PC-9 (cell line): ENCODE measurements at regions of chr10 and their contacts with region 1.

Region 1: GRCh38 chr10:106175760-106176377 is 988.6 kb downstream of the SORCS1 start:
- DNase-seq: no peak
- H3K4me3 ChIP-seq: no peak overlapping the region
- H3K27ac ChIP-seq: no peak overlapping the region
- H3K4me1 ChIP-seq: no peaks in the 10 kb centered on the region
- H3K27me3 ChIP-seq: no peaks in the 10 kb centered on the region
- CTCF ChIP-seq: peak; percentile 62

Region 2: DNA sequence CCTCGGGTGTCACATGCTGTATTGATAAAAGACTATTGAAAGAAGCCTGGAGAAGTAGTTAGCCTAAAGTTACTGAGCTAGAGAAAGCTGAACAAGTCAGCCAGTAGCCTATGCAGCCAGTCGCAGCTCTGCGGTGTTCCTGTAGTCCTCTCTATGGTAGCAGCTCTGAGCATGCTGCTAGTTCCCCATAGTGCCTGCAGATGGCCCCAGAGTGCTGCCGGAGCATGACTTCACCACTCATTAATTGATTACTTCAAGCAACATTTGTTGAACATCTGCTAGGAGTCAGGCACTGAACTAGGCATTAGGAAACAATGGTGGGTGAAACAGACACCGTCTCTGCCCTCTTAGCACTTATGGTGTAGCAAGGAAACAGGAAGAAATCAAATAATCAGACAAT is 1112.1 kb before region 1 on chr10:
- CTCF ChIA-PET with region 1: no interaction called
- POLR2A ChIA-PET with region 1: no interaction called
- intact Hi-C with region 1: loop called (anchors 10 kb)
- DNase-seq: peak in 1 of 2 experiments; percentile 0
- H3K4me3 ChIP-seq: no peak overlapping the region
- H3K27ac ChIP-seq: no peak overlapping the region
- H3K4me1 ChIP-seq: no peaks in the 10 kb centered on the region
- H3K27me3 ChIP-seq: no peaks in the 10 kb centered on the region
- CTCF ChIP-seq: peak; percentile 53

Region 3: DNA sequence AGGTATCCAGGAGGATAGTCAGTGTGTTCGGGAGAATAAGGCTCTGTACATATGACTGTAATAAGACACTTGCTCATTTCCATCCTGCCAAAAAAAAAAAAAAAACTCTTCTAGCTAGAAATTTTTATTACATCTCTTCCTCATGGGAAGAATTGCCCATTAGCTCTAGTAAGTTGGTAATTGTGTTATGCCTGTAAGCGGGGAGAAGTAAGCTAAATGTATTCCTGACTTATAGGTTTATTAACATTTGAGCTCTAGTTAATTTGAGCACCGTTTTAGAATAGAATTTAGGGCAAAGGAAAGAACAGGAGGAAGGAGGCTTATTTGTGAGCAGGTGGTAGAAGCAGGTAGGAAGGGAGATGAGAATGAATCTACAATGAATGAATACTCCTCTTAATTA is 222.0 kb before region 1 on chr10:
- CTCF ChIA-PET with region 1: no interaction called
- POLR2A ChIA-PET with region 1: no interaction called
- intact Hi-C with region 1: loop called (anchors 2 kb)
- DNase-seq: no peak
- H3K4me3 ChIP-seq: no peak overlapping the region
- H3K27ac ChIP-seq: no peak overlapping the region
- H3K4me1 ChIP-seq: no peaks in the 10 kb centered on the region
- H3K27me3 ChIP-seq: no peaks in the 10 kb centered on the region
- CTCF ChIP-seq: no peak

Region 4: GRCh38 chr10:106147021-106147420 is 28.8 kb before region 1 on chr10:
- CTCF ChIA-PET with region 1: no interaction called
- POLR2A ChIA-PET with region 1: no interaction called
- intact Hi-C with region 1: no loop called
- DNase-seq: no peak
- H3K4me3 ChIP-seq: no peak overlapping the region
- H3K27ac ChIP-seq: no peak overlapping the region
- H3K4me1 ChIP-seq: no peaks in the 10 kb centered on the region
- H3K27me3 ChIP-seq: no peaks in the 10 kb centered on the region
- CTCF ChIP-seq: no peak

Region 5: GRCh38 chr10:106252541-106252940 is 76.7 kb after region 1 on chr10:
- CTCF ChIA-PET with region 1: no interaction called
- POLR2A ChIA-PET with region 1: no interaction called
- intact Hi-C with region 1: no loop called
- DNase-seq: no peak
- H3K4me3 ChIP-seq: no peak overlapping the region
- H3K27ac ChIP-seq: no peak overlapping the region
- H3K4me1 ChIP-seq: no peaks in the 10 kb centered on the region
- H3K27me3 ChIP-seq: no peaks in the 10 kb centered on the region
- CTCF ChIP-seq: no peak

Region 6: GRCh38 chr10:106271237-106271636 is 95.4 kb after region 1 on chr10:
- CTCF ChIA-PET with region 1: no interaction called
- POLR2A ChIA-PET with region 1: no interaction called
- intact Hi-C with region 1: no loop called
- DNase-seq: no peak
- H3K4me3 ChIP-seq: no peak overlapping the region
- H3K27ac ChIP-seq: no peak overlapping the region
- H3K4me1 ChIP-seq: no peaks in the 10 kb centered on the region
- H3K27me3 ChIP-seq: no peaks in the 10 kb centered on the region
- CTCF ChIP-seq: no peak